ENCODE measurements at regions of chr15 and their contacts with region 1.

Region 1: GRCh38 chr15:50774450-50774849 is 8.9 kb upstream of the SPPL2A start:
- DNase-seq: no peak
- H3K4me3 ChIP-seq: no peak overlapping the region
- H3K27ac ChIP-seq: no peak overlapping the region
- H3K4me1 ChIP-seq: no peaks in the 10 kb centered on the region
- H3K27me3 ChIP-seq: no peaks in the 10 kb centered on the region
- CTCF ChIP-seq: no peak

Region 2: GRCh38 chr15:50712018-50712417 is 62.4 kb before region 1 on chr15:
- CTCF ChIA-PET with region 1: no interaction called
- dilution Hi-C with region 1: loop called (anchors 5 kb)
- in situ Hi-C with region 1: no loop called
- intact Hi-C with region 1: no loop called
- DNase-seq: no peak
- H3K4me3 ChIP-seq: no peak overlapping the region
- H3K27ac ChIP-seq: no peak overlapping the region
- H3K4me1 ChIP-seq: no peaks in the 10 kb centered on the region
- H3K27me3 ChIP-seq: no peaks in the 10 kb centered on the region
- CTCF ChIP-seq: no peak